GM10248 (cell line): ENCODE measurements at regions of chr19 and their contacts with region 1.

Region 1: DNA sequence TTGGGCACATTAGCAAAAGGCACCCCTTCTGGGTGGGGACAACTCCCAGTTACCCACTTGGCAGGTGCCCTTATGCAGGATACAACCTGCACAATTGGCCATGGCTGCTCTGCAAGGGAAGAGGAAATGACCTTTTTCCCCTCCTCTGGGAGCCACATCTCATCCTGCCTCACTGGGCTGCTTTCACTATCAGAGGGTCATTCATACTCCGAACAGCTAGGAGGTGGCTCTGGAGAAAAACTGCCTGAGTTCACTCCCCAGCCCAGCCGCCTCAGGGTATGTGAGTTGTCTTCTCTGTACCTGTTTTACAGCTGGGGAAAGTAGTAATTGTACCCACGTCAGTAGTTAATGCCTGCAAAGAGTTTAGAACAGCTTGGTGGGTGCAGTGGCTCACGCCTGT is 7.1 kb upstream of the ACTN4 start:
- DNase-seq: no peak
- CTCF ChIP-seq: no peak

Region 2: DNA sequence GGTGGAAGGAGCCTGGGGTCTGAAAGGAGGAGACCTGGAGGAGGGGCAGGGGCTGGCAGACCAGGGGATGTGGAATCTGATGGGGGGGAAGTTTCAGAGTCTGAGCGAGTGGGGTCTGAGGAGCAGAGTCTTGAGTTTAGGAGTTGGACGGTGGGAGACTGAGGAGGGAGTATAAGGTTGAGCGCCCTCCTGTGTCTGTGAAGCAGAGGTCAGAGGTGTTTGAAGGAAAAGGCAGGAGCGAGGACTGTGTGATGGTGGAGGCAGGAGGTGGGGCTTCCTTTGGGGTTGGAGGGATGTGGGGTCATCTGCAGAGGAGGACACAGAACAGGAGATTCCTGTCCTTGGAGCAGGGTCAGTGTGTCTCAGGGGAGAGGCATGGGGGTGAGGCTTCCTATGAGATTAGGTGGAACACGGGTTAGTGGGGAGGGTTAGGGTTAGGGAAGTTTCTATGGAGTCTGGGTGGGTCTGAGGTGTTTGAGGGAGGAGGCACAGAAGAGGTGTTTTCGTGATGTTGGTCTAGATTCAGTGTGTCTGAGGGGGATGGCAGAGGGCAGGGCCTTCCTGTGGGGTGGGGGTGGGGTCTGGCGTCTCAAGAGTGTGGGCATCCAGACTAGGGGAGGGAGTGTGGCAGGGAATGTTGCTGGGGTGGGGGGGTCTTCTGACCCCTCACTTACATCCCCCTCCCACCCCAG is 198.6 kb before region 1 on chr19:
- CTCF ChIA-PET with region 1: no interaction called
- POLR2A ChIA-PET with region 1: no interaction called
- DNase-seq: peak; percentile 55
- CTCF ChIP-seq: peak; percentile 44

Region 3: GRCh38 chr19:38544034-38544958 is 96.1 kb before region 1 on chr19:
- CTCF ChIA-PET with region 1: interaction called, 64 read pairs
- POLR2A ChIA-PET with region 1: no interaction called
- DNase-seq: peak; percentile 75
- CTCF ChIP-seq: peak; percentile 28

Region 4: DNA sequence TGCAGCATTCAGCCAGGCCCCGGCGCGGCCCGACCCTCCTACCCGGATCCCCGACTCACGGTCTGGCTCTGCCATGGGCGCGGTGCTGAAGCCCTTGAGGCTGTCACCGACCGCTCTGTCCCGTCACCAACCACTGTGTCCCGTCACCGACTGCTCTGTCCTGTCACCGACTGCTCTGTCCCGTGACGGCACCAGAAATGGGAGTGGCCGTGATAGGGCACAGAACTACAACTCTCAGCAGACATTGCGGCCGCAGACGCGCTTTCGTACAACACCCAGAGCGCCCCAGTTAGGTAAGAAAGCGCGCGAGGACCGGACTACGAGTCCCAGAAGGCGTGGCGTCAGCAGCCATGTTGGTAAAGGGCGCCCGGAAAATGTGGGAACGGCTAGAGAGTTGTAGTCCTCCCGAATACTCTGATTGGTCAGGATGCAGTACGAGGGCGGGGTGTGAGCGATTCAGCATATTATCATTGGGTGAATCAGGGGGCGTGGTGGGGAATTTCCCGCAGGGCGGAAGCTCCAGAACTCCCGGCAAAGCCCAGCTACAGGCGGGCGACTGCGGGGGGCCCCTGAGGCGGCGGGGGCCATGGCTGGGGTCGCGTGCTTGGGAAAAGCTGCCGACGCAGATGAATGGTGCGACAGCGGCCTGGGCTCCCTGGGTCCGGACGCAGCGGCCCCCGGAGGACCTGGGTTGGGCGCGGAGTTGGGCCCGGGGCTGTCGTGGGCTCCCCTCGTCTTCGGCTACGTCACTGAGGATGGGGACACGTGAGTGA is 259.3 kb after region 1 on chr19 and contains the starts of genes NFKBIB and SIRT2:
- CTCF ChIA-PET with region 1: no interaction called
- POLR2A ChIA-PET with region 1: no interaction called
- DNase-seq: peak; percentile 99
- CTCF ChIP-seq: no peak